ENCODE measurements at regions of chr17 and their contacts with region 1.

Region 1: GRCh38 chr17:57849874-57850754 is at the start of gene MRPS23:
- DNase-seq: peak; percentile 98
- H3K4me3 Mint-ChIP-seq: peak within 1 kb of the TSS; percentile 98
- H3K27ac Mint-ChIP-seq: peak within 1 kb of the TSS; percentile 98
- H3K4me1 Mint-ChIP-seq: peaks cover 38% of the 10 kb centered on the region
- H3K27me3 Mint-ChIP-seq: no peaks in the 10 kb centered on the region
- CTCF ChIP-seq: no peak
- total RNA-seq, gene MRPS23: 54.1 and 59.3 TPM in 2 replicates

Region 2: GRCh38 chr17:57422574-57423164 is 427.4 kb before region 1 on chr17:
- CTCF ChIA-PET with region 1: no interaction called
- POLR2A ChIA-PET with region 1: no interaction called
- intact Hi-C with region 1: no loop called
- DNase-seq: peak; percentile 93
- H3K4me3 Mint-ChIP-seq: no peak overlapping the region
- H3K27ac Mint-ChIP-seq: no peak overlapping the region
- H3K4me1 Mint-ChIP-seq: peaks cover 11% of the 10 kb centered on the region
- H3K27me3 Mint-ChIP-seq: no peaks in the 10 kb centered on the region
- CTCF ChIP-seq: no peak

Region 3: GRCh38 chr17:57861000-57861789 is 11.1 kb after region 1 on chr17:
- CTCF ChIA-PET with region 1: interaction called, 16 read pairs
- POLR2A ChIA-PET with region 1: interaction called, 53 read pairs
- intact Hi-C with region 1: no loop called
- DNase-seq: no peak
- H3K4me3 Mint-ChIP-seq: no peak overlapping the region
- H3K27ac Mint-ChIP-seq: no peak overlapping the region
- H3K4me1 Mint-ChIP-seq: peaks cover 14% of the 10 kb centered on the region
- H3K27me3 Mint-ChIP-seq: no peaks in the 10 kb centered on the region
- CTCF ChIP-seq: no peak

Region 4: GRCh38 chr17:57875309-57876115 is 25.4 kb after region 1 on chr17:
- CTCF ChIA-PET with region 1: interaction called, 10 read pairs
- POLR2A ChIA-PET with region 1: interaction called, 53 read pairs
- intact Hi-C with region 1: loop called (anchors 2 kb)
- DNase-seq: peak; percentile 94
- H3K4me3 Mint-ChIP-seq: peak overlapping the region; percentile 41
- H3K27ac Mint-ChIP-seq: peak overlapping the region; percentile 51
- H3K4me1 Mint-ChIP-seq: peaks cover 45% of the 10 kb centered on the region
- H3K27me3 Mint-ChIP-seq: no peaks in the 10 kb centered on the region
- CTCF ChIP-seq: peak; percentile 52

Region 5: DNA sequence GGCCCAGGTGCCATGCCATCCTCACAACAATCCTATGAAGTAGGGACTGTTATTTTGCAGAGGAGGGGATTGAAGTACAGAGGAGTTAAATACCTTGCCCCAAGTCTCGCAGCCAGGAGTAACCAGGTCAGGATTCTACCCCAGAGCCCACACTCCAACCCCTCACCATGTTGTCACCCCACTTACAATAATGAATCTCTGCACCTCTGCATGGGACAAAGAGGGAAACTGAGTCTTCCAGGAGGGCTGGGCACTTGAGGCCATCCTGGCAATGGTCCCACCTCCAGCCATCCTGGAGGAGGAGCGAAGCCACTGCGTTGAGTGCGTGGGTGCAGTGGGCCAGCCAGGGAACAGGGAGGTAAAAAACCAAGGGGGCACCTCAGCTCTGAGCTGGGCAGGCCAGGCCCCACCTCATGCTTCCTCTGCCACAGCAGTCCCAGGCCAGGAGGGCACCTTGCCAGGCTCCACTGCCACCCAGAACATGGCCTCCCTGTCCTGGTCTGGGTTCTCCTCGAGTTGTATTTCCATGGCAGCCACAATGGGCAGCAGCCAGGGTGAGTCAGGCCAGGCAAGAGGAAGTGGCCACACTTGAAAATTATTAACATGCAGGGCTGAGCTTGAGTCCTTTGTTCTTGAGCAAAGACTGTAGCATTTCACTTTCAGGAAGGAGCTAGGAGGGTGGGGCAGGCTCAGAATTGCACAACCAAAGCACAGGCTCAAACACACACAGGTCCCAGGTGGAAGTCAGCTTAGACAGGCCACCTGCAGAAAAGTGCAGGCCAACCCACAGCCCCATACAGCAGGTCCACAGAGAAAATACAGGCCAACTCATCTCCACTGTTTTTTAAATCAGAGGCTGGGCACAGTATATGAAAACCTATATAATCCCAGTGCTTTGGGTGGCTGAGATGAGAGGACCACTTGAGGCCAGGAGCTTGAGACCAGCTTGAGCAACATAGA is 53.0 kb after region 1 on chr17:
- CTCF ChIA-PET with region 1: interaction called, 4 read pairs
- POLR2A ChIA-PET with region 1: interaction called, 19 read pairs
- intact Hi-C with region 1: no loop called
- DNase-seq: peak; percentile 95
- H3K4me3 Mint-ChIP-seq: peak overlapping the region; percentile 22
- H3K27ac Mint-ChIP-seq: peak overlapping the region; percentile 23
- H3K4me1 Mint-ChIP-seq: peaks cover 49% of the 10 kb centered on the region
- H3K27me3 Mint-ChIP-seq: no peaks in the 10 kb centered on the region
- CTCF ChIP-seq: no peak

Region 6: DNA sequence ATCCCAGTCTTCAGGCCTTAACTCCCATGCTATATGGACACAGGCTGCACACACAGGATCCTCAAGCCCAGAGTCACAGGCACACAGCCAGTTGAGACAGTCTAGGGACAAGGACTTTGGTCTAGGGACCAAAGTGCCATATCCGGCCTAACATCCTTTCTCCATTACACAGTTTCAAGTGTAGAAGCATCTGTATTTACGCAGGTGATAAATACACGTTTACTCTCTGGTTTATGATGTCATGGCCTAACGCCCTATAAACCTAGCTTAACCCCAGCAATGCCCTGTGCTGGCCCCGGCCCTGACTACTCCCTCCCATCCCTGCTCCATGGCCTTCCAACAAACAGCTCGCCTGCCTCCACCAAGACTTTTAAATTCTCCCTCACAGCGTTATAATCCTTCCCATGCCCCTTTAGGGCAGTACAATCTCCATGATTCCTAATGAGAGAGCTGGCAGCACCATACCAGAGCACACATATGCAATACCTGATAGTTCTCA is 88.0 kb after region 1 on chr17:
- CTCF ChIA-PET with region 1: no interaction called
- POLR2A ChIA-PET with region 1: no interaction called
- intact Hi-C with region 1: no loop called
- DNase-seq: no peak
- H3K4me3 Mint-ChIP-seq: no peak overlapping the region
- H3K27ac Mint-ChIP-seq: no peak overlapping the region
- H3K4me1 Mint-ChIP-seq: peaks cover 14% of the 10 kb centered on the region
- H3K27me3 Mint-ChIP-seq: no peaks in the 10 kb centered on the region
- CTCF ChIP-seq: no peak

Region 7: DNA sequence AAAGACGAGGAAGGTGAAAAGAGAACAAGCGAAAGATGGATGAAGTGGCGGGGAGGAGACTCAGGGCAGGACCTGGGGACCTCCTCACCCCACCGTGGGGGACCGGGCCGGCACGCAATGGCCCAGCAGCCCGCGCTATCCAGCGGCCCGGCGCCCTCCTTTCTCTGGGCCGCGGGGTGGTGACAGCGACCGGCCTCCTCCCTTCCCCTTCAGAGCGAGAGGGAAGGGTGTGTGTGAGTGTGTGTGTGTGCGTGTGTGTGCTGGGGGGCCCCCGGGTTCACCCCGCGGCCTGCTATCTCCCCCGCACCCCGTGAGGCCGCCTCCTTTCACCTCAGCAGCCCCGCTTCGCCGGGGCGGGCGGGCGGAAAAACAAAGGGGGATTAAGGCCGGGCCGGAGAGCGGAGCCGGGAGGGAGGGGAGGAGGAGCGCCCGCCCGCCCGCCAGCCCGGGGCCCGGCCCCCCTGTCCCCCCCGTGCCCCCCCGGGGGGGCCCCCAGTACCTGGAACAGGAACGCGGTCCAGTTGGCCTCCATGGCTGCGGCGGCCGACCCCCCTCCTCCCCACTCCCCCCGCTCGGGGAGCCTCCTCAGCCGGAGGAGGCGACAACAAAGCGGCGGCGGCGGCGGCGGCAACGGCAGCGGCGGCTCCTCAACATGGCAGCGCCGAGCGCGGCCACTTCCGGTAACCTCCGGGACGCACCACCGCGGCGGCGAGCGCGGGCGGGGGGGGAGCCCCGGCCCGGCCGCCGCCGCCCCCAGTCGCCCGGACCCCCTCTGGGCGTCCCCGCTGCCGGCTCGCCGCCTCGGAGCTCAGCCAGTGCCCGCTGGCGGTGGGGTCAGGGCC is 137.7 kb after region 1 on chr17 and contains the start of gene VEZF1:
- CTCF ChIA-PET with region 1: interaction called, 418 read pairs
- POLR2A ChIA-PET with region 1: interaction called, 26 read pairs
- intact Hi-C with region 1: no loop called
- DNase-seq: peak; percentile 66
- H3K4me3 Mint-ChIP-seq: peak within 1 kb of the TSS; percentile 99
- H3K27ac Mint-ChIP-seq: peak within 1 kb of the TSS; percentile 95
- H3K4me1 Mint-ChIP-seq: peaks cover 34% of the 10 kb centered on the region
- H3K27me3 Mint-ChIP-seq: no peaks in the 10 kb centered on the region
- CTCF ChIP-seq: no peak
- total RNA-seq, gene VEZF1: 66.8 and 69.1 TPM in 2 replicates

Region 8: GRCh38 chr17:58006924-58007780 is 157.0 kb after region 1 on chr17 and contains the start of gene SRSF1:
- CTCF ChIA-PET with region 1: interaction called, 418 read pairs
- POLR2A ChIA-PET with region 1: interaction called, 53 read pairs
- intact Hi-C with region 1: no loop called
- DNase-seq: peak; percentile 97
- H3K4me3 Mint-ChIP-seq: peak within 1 kb of the TSS; percentile 99
- H3K27ac Mint-ChIP-seq: peak within 1 kb of the TSS; percentile 99
- H3K4me1 Mint-ChIP-seq: peaks cover 27% of the 10 kb centered on the region
- H3K27me3 Mint-ChIP-seq: no peaks in the 10 kb centered on the region
- CTCF ChIP-seq: no peak
- total RNA-seq, gene SRSF1: 381 and 493 TPM in 2 replicates